ENCODE measurements at regions of chr1 and their contacts with region 1.

Region 1: GRCh38 chr1:24502709-24503058 is at the start of gene RCAN3:
- DNase-seq: peak; percentile 93
- ATAC-seq: peak; percentile 81
- H3K4me3 Mint-ChIP-seq: peak within 1 kb of the TSS; percentile 94
- H3K27ac Mint-ChIP-seq: peak within 1 kb of the TSS; percentile 97
- H3K4me1 Mint-ChIP-seq: peaks cover 65% of the 10 kb centered on the region
- H3K27me3 Mint-ChIP-seq: no peaks in the 10 kb centered on the region
- total RNA-seq, gene RCAN3: 63.7 to 65.6 TPM

Region 2: DNA sequence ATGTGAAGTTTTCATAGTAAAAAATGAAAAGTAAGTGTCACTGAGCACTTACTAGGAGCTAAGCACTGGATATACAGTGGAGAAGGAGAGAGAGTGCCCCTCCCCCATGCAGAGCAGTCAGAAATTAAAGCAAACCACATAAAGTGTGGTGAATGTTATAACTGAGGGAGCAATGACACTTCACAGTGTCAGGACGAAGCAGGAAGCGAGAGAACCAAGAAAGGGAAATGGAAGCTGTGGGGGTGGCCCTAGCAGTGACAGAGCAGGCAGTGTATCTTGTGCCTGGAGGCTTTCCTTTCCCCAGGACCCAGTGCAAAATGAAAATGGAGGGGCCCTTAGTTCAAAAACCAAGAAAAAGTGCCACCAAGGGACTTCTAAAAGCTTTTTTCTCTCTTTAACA is 21.6 kb before region 1 on chr1:
- CTCF ChIA-PET with region 1: interaction called, 107 read pairs
- POLR2A ChIA-PET with region 1: interaction called, 126 read pairs
- DNase-seq: peak; percentile 70
- ATAC-seq: peak; percentile 78
- H3K4me3 Mint-ChIP-seq: peak overlapping the region; percentile 54
- H3K27ac Mint-ChIP-seq: peak overlapping the region; percentile 97
- H3K4me1 Mint-ChIP-seq: peaks cover 56% of the 10 kb centered on the region
- H3K27me3 Mint-ChIP-seq: no peaks in the 10 kb centered on the region

Region 3: DNA sequence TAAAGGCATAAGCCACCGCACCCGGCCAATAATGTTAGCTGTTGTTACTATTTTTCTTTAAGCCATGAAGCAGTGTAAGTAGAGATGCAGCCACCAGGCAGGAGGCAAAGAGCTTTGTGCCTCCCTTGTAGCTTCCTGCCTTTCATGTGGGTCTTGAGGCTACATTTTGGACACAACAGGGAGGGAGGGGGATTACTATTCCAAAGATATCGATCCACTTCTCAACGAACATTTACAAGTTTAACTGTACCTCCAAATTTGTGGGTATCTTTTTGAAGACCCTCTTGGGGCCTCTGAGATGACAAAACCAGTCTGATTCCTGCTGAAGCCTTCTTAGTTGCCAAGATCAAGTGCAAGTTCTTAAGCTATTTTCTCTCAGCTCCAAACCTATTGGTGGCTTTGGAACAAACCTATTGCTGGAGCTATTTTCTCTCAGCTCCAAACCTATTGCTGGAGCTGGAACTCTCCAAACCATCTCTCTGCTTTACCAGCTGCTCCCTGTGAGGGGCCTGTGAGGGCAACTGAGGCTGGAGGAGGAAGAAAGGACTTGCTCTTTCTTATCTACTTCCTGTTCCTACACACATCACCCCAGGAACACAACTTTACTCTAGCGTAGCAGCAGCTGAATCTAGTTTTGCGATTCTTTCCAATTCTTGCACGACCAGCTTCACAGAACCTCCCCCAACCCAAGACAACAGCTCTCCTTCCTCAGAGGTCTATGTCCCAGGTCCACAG is 16.2 kb before region 1 on chr1:
- CTCF ChIA-PET with region 1: interaction called, 107 read pairs
- POLR2A ChIA-PET with region 1: interaction called, 126 read pairs
- DNase-seq: peak; percentile 76
- ATAC-seq: peak; percentile 64
- H3K4me3 Mint-ChIP-seq: peak overlapping the region; percentile 51
- H3K27ac Mint-ChIP-seq: peak overlapping the region; percentile 92
- H3K4me1 Mint-ChIP-seq: peaks cover 72% of the 10 kb centered on the region
- H3K27me3 Mint-ChIP-seq: no peaks in the 10 kb centered on the region

Region 4: GRCh38 chr1:24491577-24492360 is 10.9 kb before region 1 on chr1:
- CTCF ChIA-PET with region 1: interaction called, 107 read pairs
- POLR2A ChIA-PET with region 1: interaction called, 126 read pairs
- DNase-seq: no peak
- ATAC-seq: no peak
- H3K4me3 Mint-ChIP-seq: no peak overlapping the region
- H3K27ac Mint-ChIP-seq: no peak overlapping the region
- H3K4me1 Mint-ChIP-seq: peaks cover 33% of the 10 kb centered on the region
- H3K27me3 Mint-ChIP-seq: no peaks in the 10 kb centered on the region

Region 5: GRCh38 chr1:24526940-24527542 is 24.4 kb after region 1 on chr1:
- CTCF ChIA-PET with region 1: interaction called, 36 read pairs
- POLR2A ChIA-PET with region 1: interaction called, 5 read pairs
- DNase-seq: peak; percentile 63
- ATAC-seq: peak; percentile 47
- H3K4me3 Mint-ChIP-seq: no peak overlapping the region
- H3K27ac Mint-ChIP-seq: no peak overlapping the region
- H3K4me1 Mint-ChIP-seq: peaks cover 21% of the 10 kb centered on the region
- H3K27me3 Mint-ChIP-seq: no peaks in the 10 kb centered on the region

Region 6: DNA sequence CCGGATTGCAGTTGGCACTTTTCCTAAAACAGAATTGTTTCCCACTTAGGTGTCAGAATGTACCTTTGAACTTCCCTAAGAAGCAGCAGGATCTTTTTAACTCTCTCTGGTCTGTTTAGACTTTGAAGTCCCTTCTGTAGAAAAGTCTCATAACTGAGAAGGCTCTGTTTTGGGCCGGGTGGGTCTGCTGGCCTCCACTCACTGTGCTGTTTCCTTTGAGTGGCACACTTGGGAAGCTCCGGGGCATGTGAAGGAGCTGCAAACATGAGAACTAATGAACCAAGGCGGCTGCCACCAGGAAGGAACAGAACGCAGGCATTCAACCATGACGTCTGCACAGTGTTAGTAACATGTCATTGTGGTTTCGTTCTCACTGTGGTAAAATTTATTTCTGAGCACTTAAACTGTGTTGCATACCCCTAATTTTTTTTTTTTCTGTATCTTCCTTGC is 33.7 kb after region 1 on chr1:
- CTCF ChIA-PET with region 1: interaction called, 25 read pairs
- POLR2A ChIA-PET with region 1: interaction called, 20 read pairs
- DNase-seq: peak; percentile 77
- ATAC-seq: peak; percentile 59
- H3K4me3 Mint-ChIP-seq: peak overlapping the region; percentile 84
- H3K27ac Mint-ChIP-seq: peak overlapping the region; percentile 97
- H3K4me1 Mint-ChIP-seq: peaks cover 77% of the 10 kb centered on the region
- H3K27me3 Mint-ChIP-seq: no peaks in the 10 kb centered on the region

Region 7: DNA sequence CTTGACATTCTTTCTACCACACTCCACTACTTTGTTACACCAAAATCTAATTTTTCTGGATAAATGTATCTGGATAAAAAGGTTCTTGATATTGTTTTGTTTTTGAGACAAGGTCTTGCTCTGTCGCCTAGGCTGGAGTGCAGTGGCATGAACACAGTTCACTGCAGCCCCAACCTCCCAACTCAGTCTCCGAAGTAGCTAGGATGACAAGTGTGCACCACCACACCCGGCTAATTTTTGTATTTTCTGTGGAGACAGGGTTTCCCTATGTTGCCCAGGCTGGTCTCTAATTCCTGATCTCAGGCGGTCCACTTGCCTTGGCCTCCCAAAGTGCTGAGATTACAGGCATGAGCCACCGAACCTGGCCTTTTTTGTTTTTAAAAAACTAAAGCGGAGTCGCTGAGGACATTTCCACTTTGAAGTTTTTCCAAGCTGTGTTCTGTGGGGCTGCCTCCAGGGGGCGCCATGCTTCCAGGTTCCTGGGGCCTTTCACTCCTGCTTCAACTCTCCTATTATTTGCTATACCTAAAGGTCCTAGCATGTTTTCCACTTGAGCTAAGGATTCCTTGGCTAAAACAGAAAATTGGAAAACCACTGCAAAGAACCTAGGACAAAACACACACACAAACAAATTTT is 39.1 kb after region 1 on chr1:
- CTCF ChIA-PET with region 1: interaction called, 25 read pairs
- POLR2A ChIA-PET with region 1: interaction called, 20 read pairs
- DNase-seq: peak; percentile 50
- ATAC-seq: no peak
- H3K4me3 Mint-ChIP-seq: no peak overlapping the region
- H3K27ac Mint-ChIP-seq: no peak overlapping the region
- H3K4me1 Mint-ChIP-seq: peaks cover 60% of the 10 kb centered on the region
- H3K27me3 Mint-ChIP-seq: no peaks in the 10 kb centered on the region